ENCODE measurements at regions of chr5 and their contacts with region 1.

Region 1: GRCh38 chr5:142597546-142598341 is 88.1 kb downstream of the FGF1 start:
- DNase-seq: no peak
- H3K4me3 ChIP-seq: no peak overlapping the region
- CTCF ChIP-seq: no peak

Region 2: GRCh38 chr5:142151436-142152383 is 446.0 kb before region 1 on chr5:
- CTCF ChIA-PET with region 1: interaction called, 10 read pairs
- POLR2A ChIA-PET with region 1: no interaction called
- DNase-seq: peak; percentile 41
- H3K4me3 ChIP-seq: no peak overlapping the region
- CTCF ChIP-seq: peak; percentile 62

Region 3: GRCh38 chr5:142356716-142357473 is 240.8 kb before region 1 on chr5:
- CTCF ChIA-PET with region 1: no interaction called
- POLR2A ChIA-PET with region 1: no interaction called
- DNase-seq: no peak
- H3K4me3 ChIP-seq: peak overlapping the region; percentile 61
- CTCF ChIP-seq: no peak

Region 4: DNA sequence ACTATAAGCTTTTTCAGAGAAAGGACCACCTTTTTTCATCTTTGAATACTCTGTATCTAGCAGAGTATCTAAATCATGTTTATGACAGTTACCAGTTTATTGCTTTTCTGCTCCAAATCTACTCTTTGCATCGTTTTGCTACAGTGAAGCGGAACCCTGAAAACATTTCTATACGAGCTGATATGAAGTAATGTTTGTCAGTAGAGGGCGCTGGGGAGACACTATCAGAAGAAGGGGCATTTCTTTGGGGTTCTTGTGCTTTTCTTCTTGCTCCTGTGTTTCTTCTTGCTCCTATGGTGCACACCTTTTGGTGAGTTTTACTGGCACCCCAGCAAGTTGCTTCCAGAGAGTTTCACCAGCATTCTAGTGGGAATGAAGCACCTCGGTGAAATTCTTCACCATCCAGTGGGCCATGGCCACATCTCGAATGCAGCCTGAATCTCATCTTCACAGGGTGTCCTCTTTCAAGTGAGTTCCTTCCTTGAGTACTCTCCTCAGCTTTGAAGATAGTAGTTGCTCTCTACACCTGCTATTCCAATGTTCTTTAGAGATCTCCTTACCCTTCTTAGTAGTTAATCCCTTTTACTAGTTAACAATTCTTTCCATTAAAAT is 10.3 kb before region 1 on chr5:
- CTCF ChIA-PET with region 1: interaction called, 30 read pairs
- POLR2A ChIA-PET with region 1: no interaction called
- DNase-seq: no peak
- H3K4me3 ChIP-seq: no peak overlapping the region
- CTCF ChIP-seq: peak; percentile 51

Region 5: GRCh38 chr5:142611154-142611553 is 13.4 kb after region 1 on chr5:
- CTCF ChIA-PET with region 1: interaction called, 34 read pairs
- POLR2A ChIA-PET with region 1: no interaction called
- DNase-seq: no peak
- H3K4me3 ChIP-seq: no peak overlapping the region
- CTCF ChIP-seq: peak; percentile 94

Measured in AG04449 (cell line).